B cell (primary cell): ENCODE measurements at regions of chr6 and their contacts with region 1.

Region 1: GRCh38 chr6:37018198-37019064 is 13.0 kb downstream of the FGD2 start:
- DNase-seq: peak; percentile 88
- ATAC-seq: peak; percentile 96
- H3K4me3 ChIP-seq: no peak overlapping the region
- H3K4me3 Mint-ChIP-seq: peak overlapping the region; percentile 19
- H3K27ac ChIP-seq: peak overlapping the region in 1 of 2 donors; percentile 49
- H3K27ac Mint-ChIP-seq: peak overlapping the region; percentile 76
- H3K4me1 ChIP-seq: peaks cover 14 to 21% of the 10 kb centered on the region in 2 donors
- H3K4me1 Mint-ChIP-seq: peaks cover 23% of the 10 kb centered on the region
- H3K27me3 ChIP-seq: no peaks in the 10 kb centered on the region
- H3K27me3 Mint-ChIP-seq: no peaks in the 10 kb centered on the region
- CTCF ChIP-seq: peak; percentile 90

Region 2: DNA sequence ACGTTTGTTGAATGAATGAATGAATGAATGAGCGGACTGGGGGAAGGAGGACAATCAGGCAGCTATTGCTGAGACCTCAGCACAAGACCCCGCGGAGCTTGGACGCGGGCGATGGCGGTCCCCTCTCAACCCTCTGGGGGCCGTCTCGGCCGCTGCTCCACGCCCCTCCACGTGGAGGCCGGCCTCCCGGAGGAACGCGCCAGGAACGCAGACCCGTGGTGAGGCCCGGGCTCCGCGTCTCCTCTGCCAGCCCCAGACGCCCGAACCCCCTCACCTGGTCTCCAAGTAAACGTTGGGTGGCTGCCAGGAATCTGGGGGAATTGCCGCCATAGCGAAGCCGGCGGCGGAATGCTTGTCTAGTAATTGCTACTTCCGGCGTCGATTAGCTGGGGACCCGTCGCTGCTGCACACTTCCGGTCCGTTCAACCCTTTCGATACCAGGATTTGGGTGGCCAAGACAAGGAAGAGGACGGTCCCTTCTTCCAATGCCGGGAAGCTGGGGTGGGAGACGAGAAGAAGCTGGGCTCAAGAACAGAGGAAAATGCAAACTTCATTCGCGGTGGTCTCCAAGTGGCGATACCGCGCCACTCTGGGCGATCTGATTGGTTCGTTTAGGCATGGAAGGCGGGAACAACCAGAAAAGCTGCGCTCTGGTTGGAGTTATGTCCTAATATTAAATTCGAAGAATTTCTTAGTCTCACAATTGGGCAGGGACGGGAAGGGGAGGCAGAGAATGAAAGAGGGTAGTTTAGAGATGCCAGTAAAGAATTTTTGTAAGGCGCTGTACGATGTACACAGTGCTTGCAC is 143.8 kb before region 1 on chr6 and contains the start of gene PPIL1:
- CTCF ChIA-PET with region 1: interaction called, 29 read pairs
- POLR2A ChIA-PET with region 1: interaction called, 7 read pairs
- intact Hi-C with region 1: loop called (anchors 1 kb)
- DNase-seq: peak; percentile 96
- ATAC-seq: peak; percentile 93
- H3K4me3 ChIP-seq: peak within 1 kb of the TSS; percentile 73 to 100 (median 99)
- H3K4me3 Mint-ChIP-seq: peak within 1 kb of the TSS; percentile 99
- H3K27ac ChIP-seq: peak within 1 kb of the TSS; percentile 63 to 89
- H3K27ac Mint-ChIP-seq: peak within 1 kb of the TSS; percentile 97
- H3K4me1 ChIP-seq: peaks cover 12 to 15% of the 10 kb centered on the region in 2 donors
- H3K4me1 Mint-ChIP-seq: peaks cover 32% of the 10 kb centered on the region
- H3K27me3 ChIP-seq: peaks cover 0 to 3% (median under 1%) of the 10 kb centered on the region in 4 experiments
- H3K27me3 Mint-ChIP-seq: no peaks in the 10 kb centered on the region
- CTCF ChIP-seq: no peak
- total RNA-seq, gene PPIL1: 7.0 and 10.5 TPM in 2 replicates

Region 3: GRCh38 chr6:36954262-36954931 is 64.0 kb before region 1 on chr6 and contains the start of gene PI16:
- CTCF ChIA-PET with region 1: interaction called, 10 read pairs
- POLR2A ChIA-PET with region 1: no interaction called
- intact Hi-C with region 1: no loop called
- DNase-seq: peak; percentile 34
- ATAC-seq: peak; percentile 34
- H3K4me3 ChIP-seq: peak within 1 kb of the TSS in 4 of 5 experiments; percentile 1 to 47 (median 20)
- H3K4me3 Mint-ChIP-seq: peak within 1 kb of the TSS; percentile 72
- H3K27ac ChIP-seq: peak within 1 kb of the TSS in 1 of 2 donors; percentile 7
- H3K27ac Mint-ChIP-seq: peak within 1 kb of the TSS; percentile 73
- H3K4me1 ChIP-seq: peaks cover 27 to 33% of the 10 kb centered on the region in 2 donors
- H3K4me1 Mint-ChIP-seq: peaks cover 43% of the 10 kb centered on the region
- H3K27me3 ChIP-seq: no peaks in the 10 kb centered on the region
- H3K27me3 Mint-ChIP-seq: no peaks in the 10 kb centered on the region
- CTCF ChIP-seq: no peak
- total RNA-seq, gene PI16: 1.1 and 1.4 TPM in 2 replicates

Region 4: DNA sequence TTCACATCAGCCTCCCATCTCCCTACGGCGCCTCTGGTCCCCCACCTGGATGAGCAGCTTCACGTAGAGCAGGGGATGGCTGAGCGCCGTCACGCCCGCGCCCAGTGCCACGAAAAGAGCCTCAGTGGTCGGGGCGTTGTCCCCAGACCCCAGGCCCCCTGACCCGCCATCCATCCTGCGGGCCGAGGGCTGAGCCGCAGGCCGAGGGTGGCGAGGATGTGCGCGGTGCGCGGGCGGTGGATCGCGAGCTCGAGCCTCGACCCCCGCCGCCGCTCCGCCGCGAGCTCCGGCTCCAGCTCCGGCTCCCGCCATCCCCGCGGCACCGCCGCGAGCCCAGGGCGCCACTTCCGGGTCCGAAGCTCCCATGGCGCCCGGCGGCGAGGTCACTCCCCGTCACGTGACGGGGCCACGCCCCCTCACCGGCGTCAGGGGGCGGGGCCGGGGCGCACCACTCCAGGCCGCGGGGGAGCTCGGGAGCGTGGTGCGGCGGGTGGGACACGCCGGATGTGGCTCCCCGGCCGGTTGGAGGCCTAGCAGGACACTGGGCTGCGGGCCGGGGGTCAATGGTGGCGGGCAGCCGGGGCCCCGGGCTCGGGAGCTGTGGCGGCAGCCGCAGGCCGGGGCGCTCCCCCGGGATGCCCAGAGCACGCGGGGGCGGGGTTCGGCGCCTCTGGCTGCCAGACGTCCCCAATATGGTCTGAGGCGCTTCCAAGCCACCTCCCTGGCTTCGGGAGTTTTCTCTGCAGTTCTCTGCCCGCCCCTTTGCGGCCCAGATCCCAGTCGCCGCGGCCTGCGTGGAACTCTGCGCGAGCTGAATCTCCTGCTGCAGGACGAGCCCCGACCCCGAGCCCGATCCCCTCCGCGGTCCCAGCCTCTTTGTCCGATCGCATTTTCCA is 32.4 kb before region 1 on chr6 and contains the start of gene MTCH1:
- CTCF ChIA-PET with region 1: interaction called, 223 read pairs
- POLR2A ChIA-PET with region 1: interaction called, 15 read pairs
- intact Hi-C with region 1: loop called (anchors 1 kb)
- DNase-seq: peak; percentile 96
- ATAC-seq: peak; percentile 88
- H3K4me3 ChIP-seq: peak within 1 kb of the TSS; percentile 66 to 98 (median 88)
- H3K4me3 Mint-ChIP-seq: peak within 1 kb of the TSS; percentile 96
- H3K27ac ChIP-seq: peak within 1 kb of the TSS; percentile 53 to 89
- H3K27ac Mint-ChIP-seq: peak within 1 kb of the TSS; percentile 98
- H3K4me1 ChIP-seq: peaks cover 33 to 35% of the 10 kb centered on the region in 2 donors
- H3K4me1 Mint-ChIP-seq: peaks cover 24% of the 10 kb centered on the region
- H3K27me3 ChIP-seq: no peaks in the 10 kb centered on the region
- H3K27me3 Mint-ChIP-seq: no peaks in the 10 kb centered on the region
- CTCF ChIP-seq: no peak
- total RNA-seq, gene MTCH1: 150 and 160 TPM in 2 replicates

Region 5: DNA sequence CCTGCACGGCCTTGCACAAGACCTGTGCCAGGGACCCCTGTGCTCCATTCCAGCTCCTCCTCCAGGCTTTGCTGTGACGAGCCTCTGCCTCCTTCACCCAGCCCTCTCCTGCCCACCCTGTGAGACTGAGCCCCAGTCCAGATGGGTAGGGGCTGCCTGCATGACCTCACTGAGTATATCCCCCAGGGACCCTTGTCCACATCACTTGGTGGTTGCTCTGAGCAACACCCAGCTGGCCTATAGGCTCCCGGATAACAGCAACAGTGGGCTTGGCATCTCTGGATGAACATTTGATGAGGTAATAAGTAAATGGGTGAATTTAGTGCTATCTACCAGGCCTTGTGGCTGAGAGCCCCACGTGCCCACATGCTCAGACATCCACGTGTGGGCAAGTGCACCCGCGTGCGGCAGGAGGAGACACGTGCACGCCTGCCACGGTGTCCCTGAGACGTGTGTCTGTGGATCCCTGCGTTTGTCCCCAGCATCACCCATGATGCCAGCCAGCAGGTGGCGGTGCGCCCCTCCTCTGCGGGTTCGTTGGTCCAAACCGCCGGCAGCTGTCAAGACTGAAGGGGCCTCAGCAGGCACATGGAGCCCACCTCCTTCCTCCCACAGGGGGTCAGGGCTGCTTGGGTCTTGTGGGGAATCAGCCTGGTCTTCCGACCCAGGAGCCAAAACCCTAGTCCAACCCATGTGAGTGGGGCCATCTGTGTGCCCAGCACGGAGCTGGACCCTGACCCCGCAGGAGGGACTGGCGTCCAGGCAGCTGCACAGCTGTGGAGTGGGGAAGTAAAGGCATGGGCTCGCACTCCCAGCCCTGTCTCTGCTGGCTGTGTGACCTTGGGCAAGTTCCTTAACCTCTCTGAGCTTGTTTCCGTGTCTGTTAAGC is 33.0 kb after region 1 on chr6:
- CTCF ChIA-PET with region 1: interaction called, 430 read pairs
- POLR2A ChIA-PET with region 1: interaction called, 5 read pairs
- intact Hi-C with region 1: loop called (anchors 1 kb)
- DNase-seq: peak; percentile 92
- ATAC-seq: peak; percentile 44
- H3K4me3 ChIP-seq: peak overlapping the region in 1 of 5 experiments; percentile 59
- H3K4me3 Mint-ChIP-seq: peak overlapping the region; percentile 71
- H3K27ac ChIP-seq: peak overlapping the region; percentile 91 to 98
- H3K27ac Mint-ChIP-seq: peak overlapping the region; percentile 85
- H3K4me1 ChIP-seq: peaks cover 45 to 54% of the 10 kb centered on the region in 2 donors
- H3K4me1 Mint-ChIP-seq: peaks cover 52% of the 10 kb centered on the region
- H3K27me3 ChIP-seq: no peaks in the 10 kb centered on the region
- H3K27me3 Mint-ChIP-seq: no peaks in the 10 kb centered on the region
- CTCF ChIP-seq: peak; percentile 91

Region 6: GRCh38 chr6:37381579-37381978 is 363.1 kb after region 1 on chr6:
- CTCF ChIA-PET with region 1: no interaction called
- POLR2A ChIA-PET with region 1: no interaction called
- intact Hi-C with region 1: no loop called
- DNase-seq: peak; percentile 67
- ATAC-seq: peak; percentile 28
- H3K4me3 ChIP-seq: no peak overlapping the region
- H3K4me3 Mint-ChIP-seq: no peak overlapping the region
- H3K27ac ChIP-seq: no peak overlapping the region
- H3K27ac Mint-ChIP-seq: no peak overlapping the region
- H3K4me1 ChIP-seq: peaks cover 8 to 26% of the 10 kb centered on the region in 2 donors
- H3K4me1 Mint-ChIP-seq: peaks cover 23% of the 10 kb centered on the region
- H3K27me3 ChIP-seq: no peaks in the 10 kb centered on the region
- H3K27me3 Mint-ChIP-seq: no peaks in the 10 kb centered on the region
- CTCF ChIP-seq: peak; percentile 75